ENCODE measurements at regions of chr10 and their contacts with region 1.

Region 1: GRCh38 chr10:12656518-12657142 is 307.3 kb downstream of the CAMK1D start:
- DNase-seq: peak; percentile 53
- H3K27ac ChIP-seq: no peak overlapping the region
- CTCF ChIP-seq: peak; percentile 72

Region 2: GRCh38 chr10:12264204-12264940 is 392.3 kb before region 1 on chr10:
- CTCF ChIA-PET with region 1: interaction called, 19 read pairs
- POLR2A ChIA-PET with region 1: no interaction called
- DNase-seq: peak; percentile 69
- H3K27ac ChIP-seq: peak overlapping the region; percentile 61
- CTCF ChIP-seq: peak; percentile 93

Region 3: DNA sequence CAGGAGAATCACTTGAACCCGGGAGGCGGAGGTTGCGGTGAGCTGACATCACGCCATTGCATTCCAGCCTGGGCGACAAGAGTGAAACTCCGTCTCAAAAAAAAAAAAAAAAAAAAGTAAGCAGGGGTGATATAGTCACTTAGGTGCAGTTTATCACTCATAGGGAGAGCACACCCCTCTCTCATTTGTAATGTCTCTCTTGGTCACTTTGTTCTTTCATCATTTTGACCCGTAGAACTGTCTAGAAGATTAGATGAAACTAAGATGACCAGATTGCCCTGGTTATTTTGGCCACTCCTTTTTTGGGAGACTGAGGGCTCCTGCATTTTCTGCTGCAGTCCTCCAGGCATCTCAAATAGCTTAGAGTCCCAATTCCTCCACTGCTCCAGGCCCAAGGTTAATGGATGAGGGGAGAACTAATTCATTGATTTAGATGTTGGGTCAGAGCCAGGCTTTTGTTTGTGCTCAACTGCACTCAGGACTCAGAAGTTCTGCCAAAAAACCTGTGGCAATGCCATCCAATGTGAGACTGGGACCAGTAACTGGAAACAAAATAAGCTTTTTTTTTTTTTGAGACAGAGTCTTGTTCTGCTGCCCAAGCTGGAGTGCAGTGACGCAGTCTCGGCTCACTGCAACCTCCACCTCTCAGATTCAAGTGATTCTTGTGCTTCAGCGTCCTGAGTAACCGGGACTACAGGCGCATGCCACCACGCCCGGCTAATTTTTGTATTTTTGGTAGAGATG is 357.2 kb before region 1 on chr10:
- CTCF ChIA-PET with region 1: no interaction called
- POLR2A ChIA-PET with region 1: no interaction called
- DNase-seq: no peak
- H3K27ac ChIP-seq: no peak overlapping the region
- CTCF ChIP-seq: no peak

Measured in RWPE1 (cell line).